ENCODE measurements at regions of chr5 and their contacts with region 1.

Region 1: DNA sequence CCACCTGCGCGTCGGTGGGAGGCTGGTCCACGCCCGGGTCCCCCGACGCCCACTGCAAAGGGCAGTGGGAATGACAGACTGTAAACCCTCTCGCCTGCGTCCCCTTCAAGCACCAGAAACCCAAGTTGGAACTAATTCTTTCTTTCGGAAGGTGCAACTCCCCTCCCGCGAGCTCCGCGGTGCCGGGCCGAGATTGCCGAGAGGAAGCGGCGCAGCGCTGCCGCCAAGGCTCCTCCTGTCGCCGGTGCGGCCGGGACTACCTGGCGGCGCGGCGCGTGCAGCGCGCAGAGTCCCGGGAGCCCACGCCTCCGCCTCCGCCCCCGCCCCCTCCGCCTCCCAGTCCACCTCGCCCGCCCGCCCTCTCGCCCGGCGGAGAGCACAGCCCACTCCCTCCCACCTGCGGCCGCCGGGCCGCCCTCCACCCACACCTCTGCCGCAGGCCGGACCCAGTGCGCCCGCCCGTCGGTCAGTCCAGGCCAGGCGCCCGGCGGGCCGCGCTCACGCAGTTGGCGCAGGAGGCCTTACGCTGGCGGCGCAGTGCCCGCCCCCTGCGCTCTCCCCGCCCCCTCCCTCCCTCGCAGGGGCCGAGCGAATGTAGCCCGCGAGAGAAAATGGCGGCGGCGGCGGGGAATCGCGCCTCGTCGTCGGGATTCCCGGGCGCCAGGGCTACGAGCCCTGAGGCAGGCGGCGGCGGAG is at the start of gene MAP3K1:
- DNase-seq: peak; percentile 93 to 97 (median 96)
- ATAC-seq: peak; percentile 78 to 86 (median 86)
- H3K4me3 ChIP-seq: peak within 1 kb of the TSS; percentile 53 to 96 (median 80)
- H3K27ac ChIP-seq: peak within 1 kb of the TSS; percentile 75 to 98 (median 97)
- H3K4me1 ChIP-seq: peaks cover under 1 to 34% (median 24%) of the 10 kb centered on the region in 3 donors
- H3K27me3 ChIP-seq: no peaks in the 10 kb centered on the region
- CTCF ChIP-seq: no peak
- total RNA-seq, gene MAP3K1: 11.4 to 28.7 (median 12.7) TPM

Region 2: GRCh38 chr5:56490951-56491468 is 324.1 kb before region 1 on chr5:
- intact Hi-C with region 1: loop called in 1 of 3 experiments (anchors 10 kb)
- DNase-seq: no peak
- ATAC-seq: peak in 3 of 4 donors; percentile 30 to 81 (median 61)
- H3K4me3 ChIP-seq: no peak overlapping the region
- H3K27ac ChIP-seq: peak overlapping the region in 1 of 4 donors; percentile 50
- H3K4me1 ChIP-seq: peaks cover 0 to 5% (median 0%) of the 10 kb centered on the region in 3 donors
- H3K27me3 ChIP-seq: no peaks in the 10 kb centered on the region
- CTCF ChIP-seq: no peak

Region 3: DNA sequence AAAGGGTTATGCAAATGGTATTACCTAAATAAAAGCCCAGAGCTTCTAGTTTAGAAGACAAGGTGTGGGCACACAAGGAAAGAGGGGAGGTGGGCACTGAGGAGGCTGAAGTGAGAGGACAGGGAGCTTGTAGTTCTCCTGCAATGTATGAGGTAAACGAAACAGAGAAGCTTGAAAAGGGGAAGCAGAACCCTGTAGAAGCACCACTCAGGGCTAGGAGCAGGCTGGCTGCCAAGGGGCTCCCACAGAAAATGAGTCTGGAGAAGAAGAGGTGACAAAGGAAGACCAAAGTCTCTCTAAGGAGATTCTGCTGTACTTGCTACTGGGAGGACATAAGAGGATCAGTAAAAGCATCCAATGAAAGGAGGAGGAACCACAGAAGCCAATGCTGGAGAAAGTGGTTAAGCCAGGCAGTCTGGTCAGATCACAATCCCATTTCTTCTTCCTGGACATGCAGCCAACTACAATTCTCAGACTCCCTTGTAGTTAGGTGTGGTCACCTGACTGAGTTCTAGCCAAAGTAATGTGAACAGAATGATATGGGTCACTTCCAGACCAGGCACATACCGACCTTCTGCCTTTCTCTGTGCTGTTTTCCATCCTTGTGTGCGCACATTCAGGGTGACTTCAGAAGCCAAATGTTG is 174.2 kb before region 1 on chr5:
- intact Hi-C with region 1: loop called in 1 of 3 experiments (anchors 10 kb)
- DNase-seq: peak in 4 of 6 donors; percentile 56 to 78 (median 63)
- ATAC-seq: peak; percentile 67 to 83 (median 76)
- H3K4me3 ChIP-seq: no peak overlapping the region
- H3K27ac ChIP-seq: peak overlapping the region; percentile 47 to 80 (median 63)
- H3K4me1 ChIP-seq: peaks cover 26 to 56% (median 53%) of the 10 kb centered on the region in 3 donors
- H3K27me3 ChIP-seq: no peaks in the 10 kb centered on the region
- CTCF ChIP-seq: no peak